Activated naive CD4-positive, alpha-beta T cell treated with anti-CD3 and anti-CD28 coated beads for 36 hours (primary cell): ENCODE measurements at regions of chr3 and their contacts with region 1.

Region 1: GRCh38 chr3:11306817-11307589 is 34.8 kb downstream of the ATG7 start:
- DNase-seq: peak; percentile 54
- H3K4me3 Mint-ChIP-seq: no peak overlapping the region
- H3K27ac Mint-ChIP-seq: no peak overlapping the region
- H3K4me1 Mint-ChIP-seq: peaks cover 25% of the 10 kb centered on the region
- H3K27me3 Mint-ChIP-seq: no peaks in the 10 kb centered on the region

Region 2: DNA sequence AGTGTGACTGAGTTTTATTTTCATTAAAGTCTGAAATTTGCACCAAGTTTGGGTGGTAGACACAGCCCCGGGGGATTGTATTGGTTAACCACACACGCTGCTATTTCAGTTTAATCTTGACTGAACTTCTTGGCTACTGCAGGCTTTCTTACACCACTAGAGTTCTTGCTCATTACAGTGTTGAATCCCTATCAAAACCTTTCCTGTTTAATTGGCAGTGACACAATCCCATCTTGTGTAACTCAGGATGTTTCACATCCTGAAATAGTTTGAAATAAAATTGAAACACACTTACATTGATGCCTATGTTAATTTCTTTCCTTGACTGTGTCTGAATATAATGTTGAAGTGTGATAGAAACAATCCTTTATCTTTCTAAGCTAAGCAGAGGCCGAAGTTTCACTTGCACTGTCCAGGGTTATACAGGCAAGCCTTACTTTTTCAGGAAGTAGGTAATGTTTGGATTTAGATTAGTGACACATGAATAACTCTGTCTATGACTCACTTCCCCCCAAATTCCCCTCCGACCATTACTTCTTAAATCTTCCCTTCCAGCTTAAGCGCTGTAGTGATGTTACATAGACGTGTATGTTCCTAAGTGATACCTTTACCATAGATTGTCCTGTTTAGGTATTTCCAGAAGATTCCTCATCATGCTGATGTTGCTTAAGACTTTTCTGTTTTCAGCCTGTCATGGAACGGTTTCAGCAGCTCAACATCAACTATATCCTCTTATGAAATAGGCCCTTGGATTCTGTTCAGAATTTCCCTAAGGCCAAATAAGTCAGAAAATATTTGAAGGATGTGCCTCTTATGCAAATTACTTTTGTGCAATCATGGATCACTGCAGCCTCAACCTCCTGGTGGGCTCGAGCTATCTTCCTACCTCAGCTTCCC is 18.0 kb before region 1 on chr3:
- CTCF ChIA-PET with region 1: no interaction called
- intact Hi-C with region 1: loop called (anchors 1 kb)
- DNase-seq: peak; percentile 14
- H3K4me3 Mint-ChIP-seq: no peak overlapping the region
- H3K27ac Mint-ChIP-seq: peak overlapping the region; percentile 84
- H3K4me1 Mint-ChIP-seq: peaks cover 48% of the 10 kb centered on the region
- H3K27me3 Mint-ChIP-seq: no peaks in the 10 kb centered on the region